ENCODE measurements at regions of chr4 and their contacts with region 1.

Region 1: GRCh38 chr4:99735822-99736221 is 78.2 kb upstream of the C4orf54 start:
- DNase-seq: no peak
- H3K4me3 ChIP-seq: no peak overlapping the region
- H3K27ac ChIP-seq: no peak overlapping the region
- H3K4me1 ChIP-seq: no peaks in the 10 kb centered on the region
- H3K27me3 ChIP-seq: no peaks in the 10 kb centered on the region
- CTCF ChIP-seq: no peak
- EP300 ChIP-seq: no peak
- POLR2A ChIP-seq: no peak
- RAD21 ChIP-seq: no peak

Region 2: GRCh38 chr4:99552872-99553271 is 182.9 kb before region 1 on chr4:
- CTCF ChIA-PET with region 1: no interaction called
- POLR2A ChIA-PET with region 1: no interaction called
- DNase-seq: no peak
- H3K4me3 ChIP-seq: no peak overlapping the region
- H3K27ac ChIP-seq: no peak overlapping the region
- H3K4me1 ChIP-seq: 0 out of 7 replicates have a peak, but pooled peaks cover 0 to 2% (median 0%) of the 10 kb centered on the region in 4 experiments
- H3K27me3 ChIP-seq: no peaks in the 10 kb centered on the region
- CTCF ChIP-seq: no peak
- EP300 ChIP-seq: no peak
- POLR2A ChIP-seq: no peak
- RAD21 ChIP-seq: no peak

Region 3: GRCh38 chr4:99723612-99724011 is 12.2 kb before region 1 on chr4:
- CTCF ChIA-PET with region 1: interaction called, 11 read pairs
- POLR2A ChIA-PET with region 1: no interaction called
- DNase-seq: no peak
- H3K4me3 ChIP-seq: no peak overlapping the region
- H3K27ac ChIP-seq: no peak overlapping the region
- H3K4me1 ChIP-seq: peaks cover 0 to 8% (median 1%) of the 10 kb centered on the region in 4 experiments; a peak in 5 of 7 replicates
- H3K27me3 ChIP-seq: no peaks in the 10 kb centered on the region
- CTCF ChIP-seq: no peak
- EP300 ChIP-seq: no peak
- POLR2A ChIP-seq: no peak
- RAD21 ChIP-seq: no peak

Region 4: GRCh38 chr4:99847362-99847976 is 111.6 kb after region 1 on chr4:
- CTCF ChIA-PET with region 1: no interaction called
- POLR2A ChIA-PET with region 1: no interaction called
- DNase-seq: no peak
- H3K4me3 ChIP-seq: no peak overlapping the region
- H3K27ac ChIP-seq: no peak overlapping the region
- H3K4me1 ChIP-seq: no peaks in the 10 kb centered on the region
- H3K27me3 ChIP-seq: no peaks in the 10 kb centered on the region
- CTCF ChIP-seq: no peak
- EP300 ChIP-seq: no peak
- POLR2A ChIP-seq: no peak
- RAD21 ChIP-seq: no peak

Region 5: GRCh38 chr4:100022792-100023222 is 287.0 kb after region 1 on chr4:
- CTCF ChIA-PET with region 1: no interaction called
- POLR2A ChIA-PET with region 1: no interaction called
- DNase-seq: peak; percentile 15 to 45
- H3K4me3 ChIP-seq: no peak overlapping the region
- H3K27ac ChIP-seq: no peak overlapping the region
- H3K4me1 ChIP-seq: peaks cover 0 to 3% (median 2%) of the 10 kb centered on the region in 4 experiments; a peak in 2 of 7 replicates
- H3K27me3 ChIP-seq: no peaks in the 10 kb centered on the region
- CTCF ChIP-seq: no peak
- EP300 ChIP-seq: no peak
- POLR2A ChIP-seq: no peak
- RAD21 ChIP-seq: no peak

Measured in H1 (cell line).